Activated CD4-positive, alpha-beta memory T cell treated with anti-CD3 and anti-CD28 coated beads for 36 hours (primary cell): ENCODE measurements at regions of chr6 and their contacts with region 1.

Region 1: DNA sequence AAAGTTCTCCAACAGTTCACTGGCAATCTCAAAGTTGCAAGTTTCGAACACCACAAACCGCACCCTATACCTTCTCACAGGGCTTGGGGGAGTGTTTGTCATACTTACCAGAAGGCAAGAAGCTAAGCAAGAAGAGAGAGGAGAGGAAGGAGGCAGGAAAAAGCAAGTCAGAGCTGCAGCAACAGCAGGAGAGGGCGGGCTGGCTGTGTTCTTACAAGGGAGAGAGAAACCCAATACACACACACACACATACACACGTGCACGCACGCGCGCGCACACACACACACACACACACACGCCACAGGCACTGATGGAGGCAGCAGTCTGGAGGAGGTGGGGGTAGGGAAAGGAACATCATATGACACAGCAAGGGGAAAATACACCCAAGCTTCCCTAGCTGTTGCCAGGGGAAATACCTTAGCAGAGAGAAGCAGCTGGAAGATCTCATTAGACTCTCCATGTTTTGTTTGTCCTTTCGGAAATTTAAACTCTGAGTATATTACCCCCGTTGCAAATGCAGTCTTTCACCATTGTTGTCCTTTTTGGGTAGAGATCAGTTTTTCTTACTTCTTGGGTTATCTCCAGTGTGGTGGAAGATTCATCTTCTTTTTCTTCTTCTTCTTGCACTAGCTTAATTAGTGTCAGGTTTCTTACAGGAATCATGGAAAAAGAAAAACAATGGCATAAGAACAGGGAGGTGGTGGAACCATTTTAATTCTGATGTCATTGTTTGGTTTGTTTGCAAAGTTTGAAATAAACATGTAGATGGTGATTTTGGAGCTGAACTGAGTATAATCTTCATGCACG is at the start of gene TXLNB:
- DNase-seq: peak; percentile 92
- H3K4me3 Mint-ChIP-seq: peak within 1 kb of the TSS; percentile 72
- H3K27ac Mint-ChIP-seq: peak within 1 kb of the TSS; percentile 95
- H3K4me1 Mint-ChIP-seq: peaks cover 56% of the 10 kb centered on the region
- H3K27me3 Mint-ChIP-seq: no peaks in the 10 kb centered on the region
- total RNA-seq, gene TXLNB: 0.17 to 0.31 TPM

Region 2: DNA sequence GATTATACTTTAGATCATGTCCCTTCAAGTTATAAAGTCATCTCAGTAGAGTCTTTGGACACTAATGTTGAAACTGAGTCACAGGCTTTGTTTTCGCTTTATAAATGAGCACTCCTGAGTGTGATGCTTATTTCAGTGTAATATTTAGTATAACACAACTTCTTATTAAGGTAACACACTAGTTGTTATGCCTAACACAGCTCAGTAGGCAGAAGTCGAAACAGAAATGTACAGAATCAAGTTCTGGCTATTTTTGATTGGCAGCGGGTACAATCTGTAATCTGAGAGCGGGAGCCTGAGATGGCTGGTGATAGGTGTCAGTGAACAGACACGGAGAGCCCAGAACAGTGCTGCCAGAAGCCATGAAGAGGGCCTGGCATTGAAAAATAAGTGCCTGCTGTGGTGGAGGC is 145.7 kb before region 1 on chr6:
- CTCF ChIA-PET with region 1: no interaction called
- POLR2A ChIA-PET with region 1: interaction called, 3 read pairs
- intact Hi-C with region 1: loop called (anchors 2 kb)
- DNase-seq: peak; percentile 59
- H3K4me3 Mint-ChIP-seq: peak overlapping the region; percentile 72
- H3K27ac Mint-ChIP-seq: peak overlapping the region; percentile 99
- H3K4me1 Mint-ChIP-seq: peaks cover 94% of the 10 kb centered on the region
- H3K27me3 Mint-ChIP-seq: no peaks in the 10 kb centered on the region

Region 3: GRCh38 chr6:139219271-139219729 is 72.7 kb before region 1 on chr6:
- CTCF ChIA-PET with region 1: interaction called, 12 read pairs
- POLR2A ChIA-PET with region 1: no interaction called
- intact Hi-C with region 1: loop called (anchors 1 kb)
- DNase-seq: peak; percentile 83
- H3K4me3 Mint-ChIP-seq: peak overlapping the region; percentile 27
- H3K27ac Mint-ChIP-seq: no peak overlapping the region
- H3K4me1 Mint-ChIP-seq: peaks cover 7% of the 10 kb centered on the region
- H3K27me3 Mint-ChIP-seq: no peaks in the 10 kb centered on the region

Region 4: GRCh38 chr6:139262519-139263300 is 29.3 kb before region 1 on chr6:
- CTCF ChIA-PET with region 1: interaction called, 6 read pairs
- POLR2A ChIA-PET with region 1: interaction called, 15 read pairs
- intact Hi-C with region 1: loop called (anchors 1 kb)
- DNase-seq: peak; percentile 53
- H3K4me3 Mint-ChIP-seq: peak overlapping the region; percentile 70
- H3K27ac Mint-ChIP-seq: peak overlapping the region; percentile 89
- H3K4me1 Mint-ChIP-seq: peaks cover 39% of the 10 kb centered on the region
- H3K27me3 Mint-ChIP-seq: no peaks in the 10 kb centered on the region

Region 5: DNA sequence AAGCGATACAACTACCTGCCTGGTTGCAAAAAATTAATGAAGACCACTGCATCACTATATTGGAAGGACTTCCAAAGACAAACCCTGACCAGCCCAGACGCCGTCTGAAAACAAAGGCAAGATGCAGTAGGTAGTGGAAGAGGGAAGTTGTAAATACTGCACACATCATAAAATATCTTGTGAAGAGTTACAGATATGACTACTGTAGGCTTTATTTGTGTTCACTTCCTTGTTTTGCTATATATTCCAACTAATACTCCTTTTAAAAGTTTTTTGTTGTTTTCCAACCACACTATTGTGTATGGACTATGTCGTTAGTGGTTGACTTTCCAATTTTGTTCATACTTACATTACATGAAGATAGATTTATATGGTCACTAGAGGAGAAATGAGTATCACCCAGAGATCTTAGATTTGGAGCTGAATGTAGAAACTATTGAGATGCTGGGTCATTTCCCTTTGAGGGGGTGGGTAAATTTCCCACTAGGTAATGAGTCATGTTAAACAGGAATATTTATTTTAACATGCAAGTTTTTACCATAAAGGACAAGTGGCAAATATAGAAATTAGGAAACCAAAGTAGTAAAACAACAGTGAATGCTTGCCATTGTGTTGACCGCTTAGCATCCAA is 16.4 kb after region 1 on chr6:
- CTCF ChIA-PET with region 1: no interaction called
- POLR2A ChIA-PET with region 1: interaction called, 7 read pairs
- intact Hi-C with region 1: loop called (anchors 1 kb)
- DNase-seq: no peak
- H3K4me3 Mint-ChIP-seq: no peak overlapping the region
- H3K27ac Mint-ChIP-seq: peak overlapping the region; percentile 71
- H3K4me1 Mint-ChIP-seq: peaks cover 23% of the 10 kb centered on the region
- H3K27me3 Mint-ChIP-seq: no peaks in the 10 kb centered on the region

Region 6: DNA sequence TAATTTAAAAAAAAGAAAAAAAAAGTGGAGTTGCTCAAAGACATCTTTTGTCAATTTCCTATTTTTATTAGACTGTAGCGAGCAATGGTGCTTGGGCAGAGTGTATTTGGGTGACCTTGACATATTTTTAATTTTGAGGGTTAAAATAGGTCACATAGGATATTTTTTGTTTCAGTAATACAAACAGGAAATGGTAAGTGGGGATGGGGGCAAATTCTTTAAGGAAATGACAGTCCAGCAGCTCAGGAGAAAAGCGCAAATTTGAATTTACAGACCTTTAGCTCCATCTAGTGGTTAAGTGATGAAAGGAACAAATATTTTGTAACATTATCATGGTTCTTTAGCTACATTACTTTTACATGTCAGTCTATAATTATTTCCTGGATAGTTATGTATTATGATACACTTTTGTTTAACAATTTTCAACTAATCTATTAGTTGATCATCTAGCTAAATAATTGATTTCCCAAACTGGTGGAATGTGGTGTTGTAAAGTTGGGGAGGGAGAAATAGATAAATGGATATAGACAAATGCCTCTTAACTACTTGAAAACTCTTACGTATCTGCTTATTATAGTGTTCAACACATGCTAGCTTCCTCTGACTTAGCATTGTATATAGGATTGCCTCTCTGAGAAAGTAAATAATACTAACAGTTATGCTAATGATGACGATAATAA is 72.4 kb after region 1 on chr6:
- CTCF ChIA-PET with region 1: interaction called, 7 read pairs
- POLR2A ChIA-PET with region 1: no interaction called
- intact Hi-C with region 1: loop called (anchors 2 kb)
- DNase-seq: no peak
- H3K4me3 Mint-ChIP-seq: no peak overlapping the region
- H3K27ac Mint-ChIP-seq: no peak overlapping the region
- H3K4me1 Mint-ChIP-seq: peaks cover 27% of the 10 kb centered on the region
- H3K27me3 Mint-ChIP-seq: no peaks in the 10 kb centered on the region

Region 7: DNA sequence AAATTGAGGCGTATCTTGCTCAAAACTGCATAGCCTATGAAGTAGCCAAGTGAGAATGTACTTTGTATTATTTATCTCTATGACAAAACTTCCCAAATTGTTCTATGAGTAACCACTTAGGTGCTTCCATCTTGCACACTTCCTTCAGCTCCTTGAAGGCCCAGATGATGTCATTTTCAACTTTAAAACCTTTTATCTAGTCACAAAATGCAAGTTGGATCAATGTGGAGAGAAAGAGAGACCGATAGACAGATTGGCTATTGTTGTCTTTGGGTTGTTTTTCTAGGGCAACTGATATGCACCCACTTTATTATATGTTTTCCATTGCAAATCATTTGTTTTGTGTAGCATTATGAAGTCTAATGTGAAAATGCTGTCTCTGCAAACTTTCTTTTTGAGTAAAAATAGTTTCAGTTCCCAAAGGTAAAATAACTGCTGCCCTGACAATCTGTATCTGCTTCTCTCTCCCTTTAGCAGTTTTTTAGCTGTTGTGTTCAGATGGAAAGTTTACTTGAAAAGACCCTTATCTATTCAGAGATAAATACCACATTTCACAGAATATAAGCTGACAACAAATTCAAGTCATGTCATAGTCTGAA is 156.1 kb after region 1 on chr6:
- CTCF ChIA-PET with region 1: no interaction called
- POLR2A ChIA-PET with region 1: no interaction called
- intact Hi-C with region 1: no loop called
- DNase-seq: no peak
- H3K4me3 Mint-ChIP-seq: no peak overlapping the region
- H3K27ac Mint-ChIP-seq: no peak overlapping the region
- H3K4me1 Mint-ChIP-seq: peaks cover 2% of the 10 kb centered on the region
- H3K27me3 Mint-ChIP-seq: peaks cover 2% of the 10 kb centered on the region